ENCODE measurements at regions of chr5 and their contacts with region 1.

Region 1: DNA sequence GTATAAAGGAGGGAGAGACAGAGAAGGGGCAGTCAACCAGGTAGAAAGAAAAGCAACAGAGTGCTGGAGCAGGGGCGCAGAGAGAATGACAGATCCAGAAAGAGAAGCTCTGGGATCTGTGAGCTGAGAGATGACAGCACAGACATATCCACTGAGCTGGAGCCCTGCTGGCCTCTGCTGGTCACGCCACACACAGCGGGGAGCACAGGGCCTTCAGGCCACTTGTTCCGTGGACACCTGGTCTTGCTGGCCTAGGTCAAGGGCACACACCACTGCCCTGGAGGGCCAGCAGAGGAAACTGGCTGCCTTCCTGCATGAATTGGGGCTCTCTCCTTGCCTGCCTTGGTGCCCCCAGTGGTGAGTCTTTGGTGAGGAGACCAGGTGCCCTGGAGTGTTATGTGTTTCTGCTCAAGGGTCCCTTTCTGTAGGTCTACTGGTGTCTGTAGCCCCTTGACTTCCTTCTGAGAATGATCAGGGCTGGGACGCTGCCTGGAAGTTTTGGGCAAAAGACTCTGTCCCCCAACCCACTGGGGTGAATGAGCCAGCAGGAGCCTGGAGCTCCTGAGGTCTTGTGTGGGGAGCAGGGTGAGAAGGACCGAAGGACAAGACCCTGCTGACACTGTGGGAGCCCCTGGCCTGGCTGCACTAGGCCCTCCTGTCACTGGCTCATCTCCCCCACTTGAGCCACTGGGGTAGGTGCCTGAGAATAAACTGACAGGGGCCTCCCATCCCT is 59.2 kb upstream of the ADAMTS2 start:
- DNase-seq: peak; percentile 62
- H3K4me3 ChIP-seq: no peak overlapping the region
- H3K27ac ChIP-seq: peak overlapping the region in 1 of 2 experiments; percentile 91; a peak in 1 of 4 replicates
- H3K4me1 ChIP-seq: peaks cover 0 to 58% of the 10 kb centered on the region in 2 experiments; a peak in 1 of 4 replicates
- H3K27me3 ChIP-seq: no peaks in the 10 kb centered on the region
- CTCF ChIP-seq: no peak
- EP300 ChIP-seq: no peak
- RAD21 ChIP-seq: peak; percentile 67

Region 2: DNA sequence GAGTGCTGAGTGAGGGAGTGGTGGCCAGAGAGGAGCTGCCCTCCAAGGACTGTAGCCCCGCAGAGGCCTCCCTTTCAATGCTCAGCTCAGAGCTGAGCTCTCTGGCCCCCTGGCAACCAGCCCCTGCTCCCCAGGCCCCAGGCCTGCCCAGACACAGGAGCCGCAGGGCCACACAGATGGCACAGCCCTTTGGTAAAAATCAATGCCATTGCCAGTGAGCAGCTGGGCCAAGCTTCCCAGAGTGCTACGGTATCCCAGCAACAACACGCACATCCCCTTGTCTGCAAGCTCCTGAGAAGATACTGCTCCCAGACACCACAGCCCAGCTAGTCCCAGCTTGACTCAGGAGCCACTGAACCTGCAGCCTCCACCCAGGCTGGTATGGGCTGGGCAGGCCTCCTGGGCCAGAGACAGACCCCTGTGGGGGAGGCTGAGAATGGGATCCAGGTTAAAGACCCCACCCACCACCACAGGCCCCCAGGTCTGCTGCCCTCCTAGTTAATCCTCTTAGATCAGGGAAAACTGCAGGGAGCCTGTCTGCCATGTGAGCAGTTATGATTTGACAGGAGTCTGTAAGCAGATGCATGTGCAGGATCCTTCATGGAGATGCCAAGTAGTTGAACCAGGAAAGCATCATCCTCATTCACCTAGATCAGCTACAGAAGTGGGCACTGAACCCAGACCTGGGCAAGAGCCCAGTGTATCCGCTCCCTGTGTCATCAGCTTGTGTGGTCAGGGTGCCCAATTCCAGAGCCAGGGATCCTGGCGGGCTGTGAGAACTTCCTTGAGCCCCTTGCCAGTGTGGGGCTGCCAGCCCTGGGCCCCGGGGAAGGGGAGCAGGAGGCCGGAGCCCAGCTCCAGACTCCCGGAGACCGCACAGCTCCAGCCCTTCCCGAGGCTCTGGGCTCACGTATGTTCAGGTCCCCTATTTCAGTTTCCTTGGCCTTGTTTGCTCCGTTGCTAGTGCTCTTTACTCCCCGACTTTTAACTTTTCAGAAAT is 32.5 kb before region 1 on chr5:
- CTCF ChIA-PET with region 1: interaction called, 12 read pairs
- POLR2A ChIA-PET with region 1: no interaction called
- DNase-seq: peak; percentile 64
- H3K4me3 ChIP-seq: no peak overlapping the region
- H3K27ac ChIP-seq: peak overlapping the region in 1 of 2 experiments; percentile 68; a peak in 2 of 4 replicates
- H3K4me1 ChIP-seq: peaks cover 0 to 34% of the 10 kb centered on the region in 2 experiments; a peak in 1 of 4 replicates
- H3K27me3 ChIP-seq: no peaks in the 10 kb centered on the region
- CTCF ChIP-seq: no peak
- EP300 ChIP-seq: no peak
- RAD21 ChIP-seq: no peak